ENCODE measurements at regions of chr1 and their contacts with region 1.

Region 1: DNA sequence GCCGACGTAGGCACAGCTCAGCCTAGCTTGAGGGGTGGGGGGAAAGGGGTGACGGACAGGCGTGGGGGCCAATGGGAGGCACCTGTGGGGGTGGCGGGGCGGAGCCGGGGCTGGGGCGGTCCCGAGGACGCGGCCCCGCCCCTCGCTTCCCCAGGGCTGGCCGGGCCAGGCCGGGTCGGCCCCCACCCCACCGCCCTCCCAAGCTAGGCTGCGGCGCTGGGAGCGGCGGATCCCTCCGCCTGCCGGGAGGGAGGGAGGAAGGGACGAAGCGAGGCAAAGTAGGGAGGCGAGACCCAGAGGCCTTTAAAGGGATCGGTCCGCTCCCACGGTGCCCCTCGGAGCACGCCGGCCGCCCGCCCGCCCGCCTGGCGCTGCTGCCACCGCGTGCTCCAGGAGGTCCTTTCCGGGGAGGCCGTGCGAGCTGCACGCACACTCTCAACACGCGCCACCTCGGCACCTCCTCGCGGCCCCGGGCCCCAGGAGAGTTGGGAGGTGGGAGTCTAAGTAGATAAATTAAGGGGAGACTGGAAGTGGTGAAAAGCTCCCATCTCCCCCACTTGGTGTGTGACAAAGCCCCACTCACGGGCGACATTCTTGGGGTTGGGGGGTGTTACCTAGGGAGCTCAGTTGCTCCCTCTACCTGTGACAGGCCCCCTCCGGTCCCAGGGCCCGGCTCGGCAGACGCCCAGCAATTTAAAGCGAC is 373 bp upstream of the MEF2D start:
- DNase-seq: peak; percentile 95
- H3K4me3 Mint-ChIP-seq: peak overlapping the region; percentile 92
- H3K27ac Mint-ChIP-seq: peak overlapping the region; percentile 91
- H3K4me1 Mint-ChIP-seq: peaks cover 74% of the 10 kb centered on the region
- H3K27me3 Mint-ChIP-seq: no peaks in the 10 kb centered on the region

Region 2: GRCh38 chr1:155859234-155859829 is 641.6 kb before region 1 on chr1 and contains the start of gene SYT11:
- CTCF ChIA-PET with region 1: no interaction called
- POLR2A ChIA-PET with region 1: no interaction called
- intact Hi-C with region 1: loop called (anchors 5 kb)
- DNase-seq: peak; percentile 97
- H3K4me3 Mint-ChIP-seq: peak within 1 kb of the TSS; percentile 99
- H3K27ac Mint-ChIP-seq: peak within 1 kb of the TSS; percentile 93
- H3K4me1 Mint-ChIP-seq: peaks cover 45% of the 10 kb centered on the region
- H3K27me3 Mint-ChIP-seq: no peaks in the 10 kb centered on the region
- total RNA-seq, gene SYT11: 25.0 to 25.1 TPM

Region 3: GRCh38 chr1:156212833-156213643 is 287.9 kb before region 1 on chr1 and contains the start of gene PMF1:
- CTCF ChIA-PET with region 1: no interaction called
- POLR2A ChIA-PET with region 1: interaction called, 5 read pairs
- intact Hi-C with region 1: loop called (anchors 5 kb)
- DNase-seq: peak; percentile 98
- H3K4me3 Mint-ChIP-seq: peak within 1 kb of the TSS; percentile 76
- H3K27ac Mint-ChIP-seq: peak within 1 kb of the TSS; percentile 96
- H3K4me1 Mint-ChIP-seq: peaks cover 40% of the 10 kb centered on the region
- H3K27me3 Mint-ChIP-seq: no peaks in the 10 kb centered on the region
- total RNA-seq, gene PMF1: 99.5 to 105 TPM

Region 4: GRCh38 chr1:156456622-156457465 is 44.1 kb before region 1 on chr1:
- CTCF ChIA-PET with region 1: interaction called, 11 read pairs
- POLR2A ChIA-PET with region 1: interaction called, 7 read pairs
- intact Hi-C with region 1: loop called (anchors 1 kb)
- DNase-seq: peak; percentile 99
- H3K4me3 Mint-ChIP-seq: peak overlapping the region; percentile 86
- H3K27ac Mint-ChIP-seq: peak overlapping the region; percentile 99
- H3K4me1 Mint-ChIP-seq: peaks cover 29% of the 10 kb centered on the region
- H3K27me3 Mint-ChIP-seq: no peaks in the 10 kb centered on the region

Region 5: GRCh38 chr1:156489166-156489934 is 11.6 kb before region 1 on chr1:
- CTCF ChIA-PET with region 1: interaction called, 180 read pairs
- POLR2A ChIA-PET with region 1: interaction called, 103 read pairs
- intact Hi-C with region 1: loop called (anchors 1 kb)
- DNase-seq: peak; percentile 72
- H3K4me3 Mint-ChIP-seq: peak overlapping the region; percentile 56
- H3K27ac Mint-ChIP-seq: peak overlapping the region; percentile 88
- H3K4me1 Mint-ChIP-seq: peaks cover 88% of the 10 kb centered on the region
- H3K27me3 Mint-ChIP-seq: no peaks in the 10 kb centered on the region

Region 6: DNA sequence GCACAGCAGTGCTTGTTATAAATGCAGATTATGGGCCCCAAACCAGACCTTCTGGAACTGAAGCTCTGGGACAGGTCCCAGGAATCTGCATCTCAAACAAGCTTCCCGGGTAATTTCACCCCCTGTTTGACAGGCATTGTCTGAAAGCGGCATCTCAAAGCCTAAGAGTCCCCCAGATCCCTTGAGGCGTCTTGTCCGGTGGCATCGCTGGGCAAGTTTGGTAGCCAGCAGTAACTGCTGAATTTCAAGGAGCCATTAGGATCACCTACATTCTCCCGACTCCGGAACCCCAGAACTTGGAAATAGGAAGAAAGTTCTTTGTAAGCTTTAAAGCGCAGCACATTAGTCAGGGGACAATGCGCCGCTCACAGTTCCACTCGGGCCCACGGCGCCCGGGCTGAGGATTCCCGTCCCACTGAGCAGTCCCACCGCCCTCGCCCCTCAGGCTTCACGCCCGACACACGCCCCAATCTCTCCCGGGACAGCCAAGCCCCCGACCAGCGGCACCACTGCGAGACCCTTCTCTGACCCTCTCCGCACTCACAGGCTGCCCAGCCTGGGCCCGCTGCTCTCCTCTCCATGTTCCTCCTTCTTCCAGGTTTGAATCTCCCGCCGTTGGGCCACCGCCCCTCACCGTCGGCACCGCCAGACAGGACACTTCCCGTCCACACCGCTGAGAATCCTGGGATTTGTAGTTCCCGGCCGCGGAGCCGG is 71.2 kb after region 1 on chr1 and contains the start of gene IQGAP3:
- CTCF ChIA-PET with region 1: no interaction called
- POLR2A ChIA-PET with region 1: interaction called, 4 read pairs
- intact Hi-C with region 1: loop called (anchors 5 kb)
- DNase-seq: peak; percentile 82
- H3K4me3 Mint-ChIP-seq: peak within 1 kb of the TSS; percentile 95
- H3K27ac Mint-ChIP-seq: no peak within 1 kb of the TSS
- H3K4me1 Mint-ChIP-seq: peaks cover 18% of the 10 kb centered on the region
- H3K27me3 Mint-ChIP-seq: peaks cover 25% of the 10 kb centered on the region
- total RNA-seq, gene IQGAP3: 16.9 to 19.3 TPM

Region 7: DNA sequence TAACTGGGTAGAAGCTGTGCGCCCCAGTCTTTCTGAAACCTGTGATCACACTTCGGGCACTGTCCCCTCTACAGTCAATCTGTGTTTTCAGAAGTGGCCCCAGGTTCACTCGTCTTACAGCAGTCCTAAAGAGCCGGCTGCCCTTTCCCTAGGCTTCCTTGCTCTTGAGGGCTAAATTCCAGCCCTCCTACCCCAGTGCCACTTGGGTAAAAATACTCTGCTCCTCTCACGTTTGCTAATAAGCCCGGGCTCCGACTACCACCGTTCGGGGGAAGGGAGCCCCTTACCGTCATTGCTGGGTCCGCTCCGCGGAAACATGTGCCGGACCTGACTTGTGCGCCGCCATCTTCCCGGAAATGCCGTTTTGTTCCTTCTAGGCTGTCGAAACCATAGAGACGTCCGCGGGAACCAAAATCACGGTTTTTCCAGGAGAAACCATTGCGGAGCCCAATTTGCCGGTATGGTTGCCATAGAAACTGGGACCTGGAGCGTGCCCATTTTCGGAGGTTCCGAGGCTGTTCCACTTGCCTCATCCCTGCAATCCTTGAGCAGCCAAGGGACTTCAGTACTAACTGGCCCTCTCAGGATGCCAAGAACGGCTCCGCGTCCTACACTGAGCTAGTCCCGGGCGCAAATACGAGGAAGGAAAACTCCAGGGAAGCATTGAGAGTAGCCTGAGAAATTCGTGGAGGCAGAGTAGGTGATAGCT is 100.3 kb after region 1 on chr1 and contains the start of gene GPATCH4:
- CTCF ChIA-PET with region 1: interaction called, 7 read pairs
- POLR2A ChIA-PET with region 1: no interaction called
- intact Hi-C with region 1: loop called (anchors 5 kb)
- DNase-seq: peak; percentile 88
- H3K4me3 Mint-ChIP-seq: peak within 1 kb of the TSS; percentile 94
- H3K27ac Mint-ChIP-seq: peak within 1 kb of the TSS; percentile 95
- H3K4me1 Mint-ChIP-seq: peaks cover 38% of the 10 kb centered on the region
- H3K27me3 Mint-ChIP-seq: no peaks in the 10 kb centered on the region
- total RNA-seq, gene GPATCH4: 40.2 to 43.2 TPM

Measured in activated CD4-positive, alpha-beta memory T cell treated with anti-CD3 and anti-CD28 coated beads for 36 hours (primary cell).